HAP-1 (cell line): ENCODE measurements at regions of chr12 and their contacts with region 1.

Region 1: DNA sequence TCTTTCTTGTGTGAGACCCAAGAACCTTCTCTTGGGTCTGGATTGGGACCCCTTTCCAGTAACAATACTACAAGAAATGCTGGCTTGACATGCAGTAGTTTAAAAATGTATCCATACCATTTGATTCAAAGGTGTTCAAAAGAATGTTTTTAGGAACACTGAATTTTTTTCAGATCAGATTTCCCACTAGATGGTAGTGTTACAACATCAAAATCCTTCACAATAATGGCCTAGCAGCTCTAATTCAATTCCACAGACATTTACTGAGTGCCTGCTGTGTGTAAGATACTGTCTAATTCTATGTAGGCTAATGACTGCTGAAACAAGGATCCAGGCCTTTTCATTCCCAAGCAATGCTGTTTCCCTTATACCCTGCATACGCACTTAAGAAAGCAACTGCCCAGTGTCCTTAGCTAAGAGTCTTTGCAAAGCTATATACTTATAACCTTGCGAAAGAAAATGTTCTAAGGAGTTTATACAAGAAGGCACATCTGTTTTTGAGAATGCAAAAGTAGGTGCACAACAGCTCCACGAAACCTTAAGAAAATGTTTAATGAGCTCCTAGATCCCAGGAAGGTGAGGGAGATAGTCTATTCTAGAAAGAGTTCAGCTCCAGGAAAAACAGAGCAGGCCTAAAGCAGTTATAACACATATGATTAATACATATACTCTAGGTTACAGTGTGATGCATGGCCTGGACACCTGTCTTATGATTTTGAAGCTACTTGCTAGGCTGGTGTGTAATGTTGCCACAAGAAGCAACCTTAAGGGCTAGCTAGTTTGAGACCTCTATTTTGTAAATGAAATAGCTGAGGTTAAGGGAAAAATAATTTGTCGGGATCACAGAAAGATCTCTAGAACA is 50.9 kb upstream of the PKP2 start:
- DNase-seq: no peak
- H3K4me3 ChIP-seq: no peak overlapping the region
- H3K4me1 ChIP-seq: no peaks in the 10 kb centered on the region
- H3K27me3 ChIP-seq: no peaks in the 10 kb centered on the region

Region 2: DNA sequence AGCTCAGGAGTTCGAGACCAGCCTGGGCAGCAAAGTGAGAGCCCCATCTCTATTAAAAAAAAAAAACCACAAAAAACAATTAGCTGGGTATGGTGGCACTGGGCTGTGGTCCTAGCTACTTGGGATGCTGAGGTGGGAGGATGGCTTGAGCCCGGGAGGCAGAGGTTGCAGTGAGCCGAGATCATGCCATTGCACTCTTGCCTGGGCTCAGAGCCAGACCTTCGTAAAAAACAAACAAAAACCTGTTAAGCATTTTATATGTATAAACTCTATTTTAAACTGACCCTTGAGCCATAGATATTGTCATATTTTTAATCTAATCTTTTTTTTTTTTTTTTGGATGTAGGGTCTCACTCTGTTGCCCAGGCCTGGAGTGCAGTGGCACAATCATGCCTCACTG is 232.7 kb before region 1 on chr12:
- in situ Hi-C with region 1: no loop called
- DNase-seq: no peak
- H3K4me3 ChIP-seq: no peak overlapping the region
- H3K4me1 ChIP-seq: no peaks in the 10 kb centered on the region
- H3K27me3 ChIP-seq: no peaks in the 10 kb centered on the region

Region 3: GRCh38 chr12:33125755-33126154 is 178.3 kb after region 1 on chr12:
- in situ Hi-C with region 1: no loop called
- DNase-seq: no peak
- H3K4me3 ChIP-seq: no peak overlapping the region
- H3K4me1 ChIP-seq: no peaks in the 10 kb centered on the region; the same call in 1 of the 2 replicates
- H3K27me3 ChIP-seq: no peaks in the 10 kb centered on the region

Region 4: DNA sequence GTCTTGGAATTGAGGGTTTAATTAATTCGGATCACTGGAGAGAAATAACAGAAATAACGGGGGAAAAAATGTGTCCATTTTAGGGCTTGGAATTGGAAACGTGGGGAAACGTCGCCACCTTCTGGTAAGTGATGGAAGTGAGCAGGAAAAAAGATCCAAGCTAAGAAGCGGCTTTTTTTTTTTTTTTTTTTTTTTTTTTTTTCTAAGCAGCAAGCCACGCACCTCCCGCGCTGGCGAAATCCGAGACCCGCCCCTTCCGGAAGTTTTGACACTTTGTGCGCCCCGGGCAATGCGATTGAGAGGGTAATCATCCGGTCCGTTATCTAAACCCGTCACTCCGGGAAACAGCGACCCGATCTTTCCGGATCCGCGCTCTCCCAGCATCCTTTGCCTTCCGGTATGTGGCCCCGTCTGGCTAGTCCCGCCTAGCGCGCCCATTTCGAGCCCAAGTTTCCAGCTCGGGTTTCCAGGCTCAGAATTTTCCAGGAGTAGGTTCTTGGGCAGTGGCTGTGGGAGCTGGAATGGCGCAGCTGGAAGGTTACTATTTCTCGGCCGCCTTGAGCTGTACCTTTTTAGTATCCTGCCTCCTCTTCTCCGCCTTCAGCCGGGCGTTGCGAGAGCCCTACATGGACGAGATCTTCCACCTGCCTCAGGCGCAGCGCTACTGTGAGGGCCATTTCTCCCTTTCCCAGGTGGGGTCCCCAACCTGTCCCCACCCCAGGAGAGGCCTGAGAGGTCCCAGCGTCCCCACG is 1074.8 kb after region 1 on chr12 and contains the start of gene ALG10:
- in situ Hi-C with region 1: loop called (anchors 25 kb)
- DNase-seq: peak; percentile 82 to 97
- H3K4me3 ChIP-seq: peak within 1 kb of the TSS; percentile 77
- H3K4me1 ChIP-seq: peaks cover 5% of the 10 kb centered on the region; the same call in 1 of the 2 replicates
- H3K27me3 ChIP-seq: no peaks in the 10 kb centered on the region